ENCODE measurements at regions of chr1 and their contacts with region 1.

Region 1: GRCh38 chr1:156129706-156130581 is 15.4 kb downstream of the LMNA start:
- DNase-seq: peak; percentile 95 to 96
- ATAC-seq: peak; percentile 78
- H3K4me3 ChIP-seq: no peak overlapping the region
- H3K27ac ChIP-seq: peak overlapping the region; percentile 89 to 96
- H3K4me1 ChIP-seq: no peaks in the 10 kb centered on the region
- H3K27me3 ChIP-seq: no peaks in the 10 kb centered on the region

Region 2: DNA sequence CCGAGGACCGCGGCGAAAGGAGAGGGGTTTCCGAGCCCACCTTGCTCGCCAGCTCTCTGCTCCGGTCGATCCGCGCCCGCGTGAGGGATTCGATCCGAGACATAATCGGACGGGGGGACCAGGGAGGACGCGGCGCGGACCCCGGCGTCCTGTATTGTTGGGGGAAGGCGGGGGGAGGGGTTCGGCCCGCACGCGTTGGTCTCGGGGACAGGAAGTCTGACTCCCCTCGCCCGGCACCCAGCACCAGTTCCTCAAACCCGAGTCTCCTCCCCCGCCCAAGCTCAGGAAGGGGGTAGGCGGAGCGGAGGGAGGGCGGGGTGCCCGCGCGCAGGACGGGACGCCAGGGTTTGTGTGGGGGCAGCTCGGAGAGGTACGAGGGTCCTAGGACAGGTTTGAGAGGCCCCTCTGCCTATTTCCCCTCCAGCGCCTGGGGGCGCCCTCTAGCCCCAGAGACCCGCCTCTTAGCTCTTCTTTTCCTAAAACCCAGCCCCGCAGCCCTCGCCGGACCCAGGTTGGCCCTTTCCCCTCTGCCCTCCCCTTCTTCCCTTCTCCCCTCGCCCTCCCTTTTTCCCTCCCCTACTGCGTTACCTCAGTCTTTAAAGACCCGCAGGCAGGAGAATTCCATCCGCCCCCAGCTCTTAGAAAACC is 151.5 kb before region 1 on chr1 and contains the start of gene ARHGEF2:
- intact Hi-C with region 1: loop called in 1 of 2 experiments (anchors 10 kb)
- DNase-seq: peak; percentile 93 to 94
- ATAC-seq: peak; percentile 80
- H3K4me3 ChIP-seq: peak within 1 kb of the TSS; percentile 95 to 96
- H3K27ac ChIP-seq: peak within 1 kb of the TSS; percentile 68 to 93
- H3K4me1 ChIP-seq: peaks cover 0 to 10% of the 10 kb centered on the region in 2 donors
- H3K27me3 ChIP-seq: no peaks in the 10 kb centered on the region
- total RNA-seq, gene ARHGEF2: 175 to 217 TPM

Region 3: DNA sequence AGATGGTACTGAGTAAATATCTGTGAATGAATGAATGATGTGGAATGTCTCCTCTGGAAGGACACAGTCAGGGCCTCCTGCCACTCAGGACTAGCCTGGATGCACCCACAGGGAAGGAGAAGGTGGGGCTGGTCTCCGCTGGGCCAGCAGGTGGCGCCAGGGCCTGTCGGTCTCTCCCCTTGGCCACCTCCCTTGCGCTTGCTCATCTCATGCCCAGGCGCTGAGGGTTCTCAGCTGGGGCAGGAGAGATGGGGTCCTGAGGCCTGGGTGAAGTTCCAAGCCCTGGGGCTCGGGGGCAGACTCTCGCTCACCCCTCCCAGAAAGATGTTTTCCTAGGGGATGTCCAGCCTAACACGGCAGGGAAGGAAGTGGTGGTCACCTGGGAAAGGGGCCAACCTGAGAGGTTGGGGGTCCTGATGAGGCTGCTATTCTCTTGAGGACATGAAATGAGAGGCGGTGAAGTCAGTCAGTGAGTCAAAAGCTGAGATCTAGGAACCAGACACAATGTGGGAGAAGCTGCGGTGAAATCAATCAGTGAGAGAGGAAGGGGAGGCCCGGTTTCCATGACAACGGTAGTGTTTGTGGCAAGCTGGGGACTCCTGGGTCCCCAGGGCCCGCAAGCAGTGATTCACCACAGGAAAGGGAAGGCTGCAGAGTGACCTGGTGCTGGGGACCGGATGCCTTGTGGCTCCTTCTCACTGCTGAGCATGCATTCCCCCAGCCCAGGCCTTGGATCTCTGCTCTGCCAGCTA is 33.1 kb before region 1 on chr1:
- intact Hi-C with region 1: loop called (anchors 1 to 2 kb)
- DNase-seq: peak; percentile 94 to 97
- ATAC-seq: peak; percentile 96
- H3K4me3 ChIP-seq: no peak overlapping the region
- H3K27ac ChIP-seq: peak overlapping the region; percentile 5 to 72
- H3K4me1 ChIP-seq: no peaks in the 10 kb centered on the region
- H3K27me3 ChIP-seq: no peaks in the 10 kb centered on the region

Region 4: DNA sequence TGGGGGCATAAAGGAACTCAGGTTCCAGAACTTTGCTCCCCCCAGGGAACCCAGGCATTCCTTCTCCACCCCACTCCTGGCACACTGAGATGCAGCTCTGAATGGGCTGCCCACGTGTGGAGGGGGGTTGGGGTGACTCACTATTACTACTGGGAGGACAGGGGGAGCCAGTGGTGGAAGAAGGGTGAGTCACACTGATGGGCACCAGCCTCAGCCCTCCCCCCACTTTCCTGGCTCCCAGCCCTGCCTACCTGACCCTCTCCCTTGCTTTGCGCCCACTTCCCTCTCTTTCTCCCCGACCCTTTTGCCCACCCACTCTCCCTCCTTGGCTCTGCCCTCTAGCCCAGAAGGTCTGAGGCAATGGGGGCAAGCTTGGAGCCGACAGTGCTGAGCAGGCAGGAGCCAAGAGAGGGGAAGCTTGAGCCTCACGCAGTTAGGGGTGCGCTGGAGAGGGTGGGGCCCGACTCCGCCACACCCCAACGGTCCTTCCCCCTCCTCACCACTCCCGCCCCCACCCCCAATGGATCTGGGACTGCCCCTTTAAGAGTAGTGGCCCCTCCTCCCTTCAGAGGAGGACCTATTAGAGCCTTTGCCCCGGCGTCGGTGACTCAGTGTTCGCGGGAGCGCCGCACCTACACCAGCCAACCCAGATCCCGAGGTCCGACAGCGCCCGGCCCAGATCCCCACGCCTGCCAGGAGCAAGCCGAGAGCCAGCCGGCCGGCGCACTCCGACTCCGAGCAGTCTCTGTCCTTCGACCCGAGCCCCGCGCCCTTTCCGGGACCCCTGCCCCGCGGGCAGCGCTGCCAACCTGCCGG is 15.6 kb before region 1 on chr1 and contains the start of gene LMNA:
- intact Hi-C with region 1: loop called in 1 of 2 experiments (anchors 2 kb)
- DNase-seq: peak; percentile 95 to 97
- ATAC-seq: peak; percentile 92
- H3K4me3 ChIP-seq: peak within 1 kb of the TSS; percentile 60 to 99
- H3K27ac ChIP-seq: peak within 1 kb of the TSS; percentile 88 to 95
- H3K4me1 ChIP-seq: no peaks in the 10 kb centered on the region
- H3K27me3 ChIP-seq: no peaks in the 10 kb centered on the region
- total RNA-seq, gene LMNA: 497 to 1,067 TPM